HCT116 (cell line): ENCODE measurements at regions of chr3 and their contacts with region 1.

Region 1: DNA sequence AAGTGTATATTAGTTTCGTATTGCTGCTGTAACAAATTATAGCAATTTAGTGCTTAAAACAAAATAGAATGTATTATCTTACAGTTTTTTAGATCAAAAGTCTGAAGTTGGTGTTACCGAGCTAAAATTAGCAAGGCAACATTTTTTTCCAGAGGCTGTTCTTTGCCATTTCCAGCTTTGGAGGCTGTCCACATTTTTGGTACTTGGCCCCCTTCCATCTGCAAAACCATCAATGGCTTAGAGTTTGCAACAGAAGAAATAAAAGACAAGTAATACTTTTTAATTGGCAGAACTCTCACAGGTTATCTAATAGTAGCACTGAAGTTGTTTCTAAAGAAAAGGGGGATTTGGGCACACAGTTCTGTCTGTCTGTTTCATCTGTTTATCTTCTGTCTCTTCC is 1248.5 kb downstream of the ROBO1 start:
- DNase-seq: no peak
- ATAC-seq: no peak
- H3K4me3 ChIP-seq: no peak overlapping the region
- H3K27ac ChIP-seq: no peak overlapping the region
- H3K4me1 ChIP-seq: no peaks in the 10 kb centered on the region
- H3K27me3 ChIP-seq: no peaks in the 10 kb centered on the region
- CTCF ChIP-seq: no peak
- POLR2A ChIP-seq: no peak
- RAD21 ChIP-seq: no peak

Region 2: GRCh38 chr3:78529601-78530000 is 10.3 kb after region 1 on chr3:
- CTCF ChIA-PET with region 1: no interaction called
- POLR2A ChIA-PET with region 1: no interaction called
- RAD21 ChIA-PET with region 1: no interaction called
- intact Hi-C with region 1: loop called (anchors 1 kb)
- DNase-seq: no peak
- ATAC-seq: no peak
- H3K4me3 ChIP-seq: no peak overlapping the region
- H3K27ac ChIP-seq: no peak overlapping the region
- H3K4me1 ChIP-seq: no peaks in the 10 kb centered on the region
- H3K27me3 ChIP-seq: no peaks in the 10 kb centered on the region
- CTCF ChIP-seq: no peak
- POLR2A ChIP-seq: no peak
- RAD21 ChIP-seq: no peak

Region 3: GRCh38 chr3:79199966-79200365 is 680.7 kb after region 1 on chr3:
- CTCF ChIA-PET with region 1: no interaction called
- POLR2A ChIA-PET with region 1: no interaction called
- RAD21 ChIA-PET with region 1: no interaction called
- intact Hi-C with region 1: no loop called
- DNase-seq: no peak
- ATAC-seq: no peak
- H3K4me3 ChIP-seq: no peak overlapping the region
- H3K27ac ChIP-seq: no peak overlapping the region
- H3K4me1 ChIP-seq: no peaks in the 10 kb centered on the region
- H3K27me3 ChIP-seq: no peaks in the 10 kb centered on the region
- CTCF ChIP-seq: no peak
- POLR2A ChIP-seq: no peak
- RAD21 ChIP-seq: no peak